ENCODE measurements at regions of chr22 and their contacts with region 1.

Region 1: GRCh38 chr22:19854778-19855503 is at the starts of genes GNB1L and RTL10:
- DNase-seq: peak; percentile 100
- ATAC-seq: peak; percentile 92
- H3K4me3 ChIP-seq: peak within 1 kb of the TSS; percentile 62
- H3K27ac ChIP-seq: peak within 1 kb of the TSS; percentile 84
- H3K4me1 ChIP-seq: peaks cover 23 to 63% of the 10 kb centered on the region in 2 experiments
- H3K27me3 ChIP-seq: no peaks in the 10 kb centered on the region
- CTCF ChIP-seq: peak; percentile 29 to 50 (median 49); a peak in 5 of 6 replicates
- EP300 ChIP-seq: peak; percentile 57
- POLR2A ChIP-seq: no peak
- RAD21 ChIP-seq: 0 out of 4 replicates have a peak, but pooled peaks of 1 of the 2 experiments have one; percentile 46
- polyA plus RNA-seq, gene GNB1L: 0.56 to 3.5 TPM
- polyA plus RNA-seq, gene RTL10: 23.6 to 33.7 TPM

Region 2: GRCh38 chr22:19661156-19661555 is 193.8 kb before region 1 on chr22:
- CTCF ChIA-PET with region 1: no interaction called
- POLR2A ChIA-PET with region 1: no interaction called
- in situ Hi-C with region 1: no loop called
- intact Hi-C with region 1: no loop called
- DNase-seq: peak in 2 of 4 experiments; percentile 30 to 33
- ATAC-seq: no peak
- H3K4me3 ChIP-seq: no peak overlapping the region
- H3K27ac ChIP-seq: no peak overlapping the region
- H3K4me1 ChIP-seq: peaks cover 13 to 21% of the 10 kb centered on the region in 2 experiments; a peak in 4 of 5 replicates
- H3K27me3 ChIP-seq: peaks cover 33 to 36% of the 10 kb centered on the region in 2 experiments
- CTCF ChIP-seq: no peak
- EP300 ChIP-seq: no peak
- POLR2A ChIP-seq: no peak
- RAD21 ChIP-seq: no peak

Region 3: DNA sequence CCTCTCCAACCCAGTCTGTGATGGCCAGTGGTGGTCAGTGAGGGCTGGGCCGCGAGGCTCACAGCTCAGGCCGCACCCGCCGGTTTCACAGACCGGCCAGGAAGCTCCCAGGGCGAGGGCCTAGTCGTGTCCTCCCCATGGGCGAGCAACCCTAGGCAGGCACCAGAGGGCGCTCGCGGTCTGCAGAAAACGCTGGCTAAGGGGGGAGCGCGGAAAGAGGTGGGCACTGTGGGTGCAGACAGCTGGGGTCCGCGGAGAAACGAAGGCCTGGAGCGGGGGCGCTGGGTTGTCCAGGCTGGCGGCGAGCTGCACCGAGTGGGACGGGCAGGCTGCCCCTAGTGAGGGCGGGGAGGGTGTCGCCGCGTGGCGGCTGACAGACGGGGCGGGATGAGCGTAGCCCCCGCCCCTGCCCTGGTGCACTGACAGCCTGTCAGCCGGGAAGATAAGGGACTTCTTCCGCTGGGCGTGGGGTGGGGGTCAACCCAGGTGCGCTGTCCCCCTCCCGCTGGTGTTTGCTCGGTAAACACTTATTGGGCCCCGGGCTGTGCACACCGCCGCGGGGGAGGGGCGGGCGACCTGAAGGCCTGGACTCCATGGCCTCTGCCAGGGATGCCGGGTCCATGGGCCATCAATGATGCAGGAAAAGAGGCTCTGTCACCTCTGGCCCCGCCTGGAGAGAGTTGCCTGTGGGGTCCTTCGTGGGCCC is 124.1 kb before region 1 on chr22:
- CTCF ChIA-PET with region 1: no interaction called
- POLR2A ChIA-PET with region 1: interaction called, 13 read pairs
- in situ Hi-C with region 1: no loop called
- intact Hi-C with region 1: loop called (anchors 2 kb)
- DNase-seq: peak; percentile 98 to 99 (median 98)
- ATAC-seq: peak; percentile 91
- H3K4me3 ChIP-seq: peak overlapping the region; percentile 45
- H3K27ac ChIP-seq: peak overlapping the region; percentile 6; the same call in 2 of the 3 replicates
- H3K4me1 ChIP-seq: peaks cover 11 to 63% of the 10 kb centered on the region in 2 experiments
- H3K27me3 ChIP-seq: peaks cover 0 to 21% of the 10 kb centered on the region in 2 experiments; a peak in 3 of 5 replicates
- CTCF ChIP-seq: peak; percentile 99 to 100 (median 100)
- EP300 ChIP-seq: peak; percentile 78
- POLR2A ChIP-seq: no peak; the same call in 1 of the 2 replicates
- RAD21 ChIP-seq: peak; percentile 100

Region 4: GRCh38 chr22:19779685-19780268 is 75.2 kb before region 1 on chr22:
- CTCF ChIA-PET with region 1: no interaction called
- POLR2A ChIA-PET with region 1: interaction called, 6 read pairs
- in situ Hi-C with region 1: no loop called
- intact Hi-C with region 1: loop called (anchors 1 kb)
- DNase-seq: peak in 2 of 4 experiments; percentile 56 to 63
- ATAC-seq: peak; percentile 17
- H3K4me3 ChIP-seq: no peak overlapping the region
- H3K27ac ChIP-seq: peak overlapping the region; percentile 75
- H3K4me1 ChIP-seq: peaks cover 20 to 44% of the 10 kb centered on the region in 2 experiments
- H3K27me3 ChIP-seq: 0 out of 5 replicates have a peak, but pooled peaks cover 0 to 2% of the 10 kb centered on the region in 2 experiments
- CTCF ChIP-seq: 0 out of 6 replicates have a peak, but pooled peaks of 1 of the 3 experiments have one; percentile 3
- EP300 ChIP-seq: no peak
- POLR2A ChIP-seq: no peak
- RAD21 ChIP-seq: no peak

Region 5: GRCh38 chr22:19824197-19825015 is 30.5 kb before region 1 on chr22:
- CTCF ChIA-PET with region 1: no interaction called
- POLR2A ChIA-PET with region 1: interaction called, 247 read pairs
- in situ Hi-C with region 1: no loop called
- intact Hi-C with region 1: loop called (anchors 5 kb)
- DNase-seq: no peak
- ATAC-seq: no peak
- H3K4me3 ChIP-seq: no peak overlapping the region
- H3K27ac ChIP-seq: no peak overlapping the region
- H3K4me1 ChIP-seq: peaks cover 13 to 52% of the 10 kb centered on the region in 2 experiments; a peak in 4 of 5 replicates
- H3K27me3 ChIP-seq: no peaks in the 10 kb centered on the region
- CTCF ChIP-seq: no peak
- EP300 ChIP-seq: no peak
- POLR2A ChIP-seq: no peak
- RAD21 ChIP-seq: no peak

Region 6: GRCh38 chr22:19868773-19869471 is 14.0 kb after region 1 on chr22:
- CTCF ChIA-PET with region 1: no interaction called
- POLR2A ChIA-PET with region 1: interaction called, 51 read pairs
- in situ Hi-C with region 1: no loop called
- intact Hi-C with region 1: no loop called
- DNase-seq: no peak
- ATAC-seq: peak; percentile 2; the same call in 1 of the 3 replicates
- H3K4me3 ChIP-seq: no peak overlapping the region
- H3K27ac ChIP-seq: no peak overlapping the region
- H3K4me1 ChIP-seq: peaks cover 8 to 53% of the 10 kb centered on the region in 2 experiments; a peak in 4 of 5 replicates
- H3K27me3 ChIP-seq: peaks cover 2 to 30% of the 10 kb centered on the region in 2 experiments; a peak in 3 of 5 replicates
- CTCF ChIP-seq: no peak
- EP300 ChIP-seq: no peak
- POLR2A ChIP-seq: no peak
- RAD21 ChIP-seq: no peak

Region 7: DNA sequence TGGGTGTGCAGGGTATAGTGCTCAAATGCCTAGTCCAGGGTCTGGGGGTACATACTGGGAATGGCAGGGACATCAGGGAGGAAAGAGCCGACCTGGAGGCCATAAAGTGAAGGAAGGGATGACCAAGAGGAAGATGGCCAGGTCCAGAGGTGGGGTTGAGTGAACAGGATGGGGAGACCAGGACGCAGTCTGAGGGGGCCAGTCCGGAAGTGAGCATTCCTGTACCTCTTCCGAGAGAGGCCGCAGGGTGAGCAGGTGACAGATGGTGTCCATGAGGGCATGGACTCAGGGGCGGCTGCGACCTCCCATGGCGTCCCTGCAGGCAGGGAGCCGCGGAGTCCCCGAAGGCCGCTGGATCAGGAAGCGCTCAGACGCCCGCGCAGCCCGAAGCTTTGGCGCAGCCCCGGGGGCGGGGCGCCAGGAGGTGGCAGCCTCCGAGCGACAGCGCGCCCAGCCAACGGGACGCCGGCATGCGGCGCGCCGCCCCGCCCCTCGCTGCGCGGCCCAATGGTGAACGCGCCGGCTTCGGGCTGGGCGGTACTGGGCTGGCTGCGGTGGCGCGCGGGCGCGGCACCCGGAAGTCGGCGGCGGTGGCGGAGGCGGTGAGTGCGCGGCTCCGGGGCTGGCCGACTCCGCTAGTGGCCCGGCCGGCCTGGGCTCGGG is 165.7 kb after region 1 on chr22 and contains the start of gene TANGO2:
- CTCF ChIA-PET with region 1: no interaction called
- POLR2A ChIA-PET with region 1: no interaction called
- in situ Hi-C with region 1: no loop called
- intact Hi-C with region 1: loop called (anchors 10 kb)
- DNase-seq: peak; percentile 100
- ATAC-seq: peak; percentile 87
- H3K4me3 ChIP-seq: peak within 1 kb of the TSS; percentile 70
- H3K27ac ChIP-seq: peak within 1 kb of the TSS; percentile 85
- H3K4me1 ChIP-seq: peaks cover 51 to 78% of the 10 kb centered on the region in 2 experiments
- H3K27me3 ChIP-seq: peaks cover 0 to 8% of the 10 kb centered on the region in 2 experiments; a peak in 2 of 5 replicates
- CTCF ChIP-seq: peak in 2 of 3 experiments; percentile 24 to 26; a peak in 3 of 6 replicates
- EP300 ChIP-seq: no peak; the same call in 1 of the 2 replicates
- POLR2A ChIP-seq: no peak
- RAD21 ChIP-seq: 0 out of 4 replicates have a peak, but pooled peaks of 1 of the 2 experiments have one; percentile 21
- polyA plus RNA-seq, gene TANGO2: 15.5 to 17.5 TPM

Region 8: GRCh38 chr22:20656902-20657836 is 802.2 kb after region 1 on chr22:
- CTCF ChIA-PET with region 1: no interaction called
- POLR2A ChIA-PET with region 1: no interaction called
- in situ Hi-C with region 1: no loop called
- intact Hi-C with region 1: no loop called
- DNase-seq: peak; percentile 80 to 94 (median 86)
- ATAC-seq: peak; percentile 86
- H3K4me3 ChIP-seq: peak overlapping the region; percentile 37
- H3K27ac ChIP-seq: peak overlapping the region; percentile 58; the same call in 2 of the 3 replicates
- H3K4me1 ChIP-seq: peaks cover 0 to 9% of the 10 kb centered on the region in 2 experiments; a peak in 3 of 5 replicates
- H3K27me3 ChIP-seq: peaks cover 39 to 45% of the 10 kb centered on the region in 2 experiments
- CTCF ChIP-seq: no peak; a peak in 1 of 6 replicates
- EP300 ChIP-seq: no peak
- POLR2A ChIP-seq: peak; percentile 96
- RAD21 ChIP-seq: 0 out of 4 replicates have a peak, but pooled peaks of 1 of the 2 experiments have one; percentile 5